ENCODE measurements at regions of chr21 and their contacts with region 1.

Region 1: GRCh38 chr21:34946916-34947534 is 102.1 kb downstream of the RUNX1 start:
- DNase-seq: no peak
- H3K4me3 Mint-ChIP-seq: no peak overlapping the region
- H3K27ac Mint-ChIP-seq: no peak overlapping the region
- H3K4me1 Mint-ChIP-seq: peaks cover 77% of the 10 kb centered on the region
- H3K27me3 Mint-ChIP-seq: no peaks in the 10 kb centered on the region

Region 2: DNA sequence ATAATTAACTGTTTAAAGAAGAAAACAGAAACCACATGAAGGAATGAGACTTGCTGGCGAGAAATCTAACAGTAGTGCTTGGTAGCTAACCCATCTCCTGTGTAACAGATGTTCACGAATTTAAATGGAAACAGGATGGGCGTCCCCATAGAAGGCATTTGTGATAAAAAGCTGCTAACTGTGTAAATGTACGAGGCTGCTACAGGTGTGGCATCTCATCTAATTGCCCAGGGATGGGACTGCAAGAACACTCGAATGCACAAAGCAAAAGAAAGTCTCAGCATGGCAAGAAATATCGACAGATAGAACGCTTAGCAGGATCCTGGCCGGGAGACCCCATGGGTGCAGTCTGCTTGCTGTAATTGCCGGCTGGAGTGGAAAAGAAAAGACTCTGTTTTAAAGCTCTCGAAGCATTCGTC is 10.6 kb before region 1 on chr21:
- CTCF ChIA-PET with region 1: interaction called, 16 read pairs
- POLR2A ChIA-PET with region 1: interaction called, 5 read pairs
- DNase-seq: peak; percentile 40
- H3K4me3 Mint-ChIP-seq: peak overlapping the region; percentile 53
- H3K27ac Mint-ChIP-seq: peak overlapping the region; percentile 96
- H3K4me1 Mint-ChIP-seq: peaks cover 91% of the 10 kb centered on the region
- H3K27me3 Mint-ChIP-seq: no peaks in the 10 kb centered on the region

Region 3: DNA sequence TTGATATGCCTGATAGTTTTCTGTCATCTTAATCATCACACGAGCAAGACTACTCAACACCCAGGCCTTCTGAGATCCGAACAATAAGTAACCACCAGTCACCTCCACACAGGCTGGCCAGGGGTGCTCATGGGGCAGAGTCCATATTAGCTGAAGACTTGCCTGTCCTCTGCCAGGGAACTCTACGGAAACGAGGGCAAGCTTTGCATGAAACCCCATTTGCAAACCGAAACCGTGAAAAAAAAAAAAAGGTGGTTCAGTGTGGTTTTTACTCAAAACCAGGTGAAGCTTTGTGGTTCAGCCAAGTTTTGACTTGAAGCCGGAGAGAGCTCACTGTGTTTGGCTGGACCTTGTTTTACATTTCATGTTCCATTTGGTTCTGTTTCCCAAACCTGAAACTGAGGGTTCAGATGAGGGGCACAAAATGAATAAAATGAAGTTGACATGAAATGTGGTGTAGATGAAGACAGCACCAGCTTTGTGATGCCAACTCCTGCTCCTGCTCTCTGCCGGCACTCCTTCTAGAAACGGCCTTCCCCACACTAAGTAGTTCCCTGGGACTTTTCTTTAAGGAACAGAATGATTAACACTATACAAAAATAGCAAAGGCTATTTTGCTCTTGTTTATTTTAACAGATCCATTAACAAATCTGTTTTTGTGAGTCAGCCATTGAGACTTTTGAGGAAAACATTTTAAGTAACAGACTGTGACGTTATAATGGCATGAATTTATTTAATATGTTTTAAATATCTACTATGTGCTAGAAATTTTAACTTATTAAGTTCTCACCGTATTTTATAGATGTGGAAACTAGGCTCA is 27.3 kb after region 1 on chr21:
- CTCF ChIA-PET with region 1: interaction called, 12 read pairs
- POLR2A ChIA-PET with region 1: no interaction called
- DNase-seq: peak; percentile 68
- H3K4me3 Mint-ChIP-seq: peak overlapping the region; percentile 65
- H3K27ac Mint-ChIP-seq: peak overlapping the region; percentile 87
- H3K4me1 Mint-ChIP-seq: peaks cover 72% of the 10 kb centered on the region
- H3K27me3 Mint-ChIP-seq: peaks cover 28% of the 10 kb centered on the region